HEK293 (cell line): ENCODE measurements at regions of chr22 and their contacts with region 1.

Region 1: DNA sequence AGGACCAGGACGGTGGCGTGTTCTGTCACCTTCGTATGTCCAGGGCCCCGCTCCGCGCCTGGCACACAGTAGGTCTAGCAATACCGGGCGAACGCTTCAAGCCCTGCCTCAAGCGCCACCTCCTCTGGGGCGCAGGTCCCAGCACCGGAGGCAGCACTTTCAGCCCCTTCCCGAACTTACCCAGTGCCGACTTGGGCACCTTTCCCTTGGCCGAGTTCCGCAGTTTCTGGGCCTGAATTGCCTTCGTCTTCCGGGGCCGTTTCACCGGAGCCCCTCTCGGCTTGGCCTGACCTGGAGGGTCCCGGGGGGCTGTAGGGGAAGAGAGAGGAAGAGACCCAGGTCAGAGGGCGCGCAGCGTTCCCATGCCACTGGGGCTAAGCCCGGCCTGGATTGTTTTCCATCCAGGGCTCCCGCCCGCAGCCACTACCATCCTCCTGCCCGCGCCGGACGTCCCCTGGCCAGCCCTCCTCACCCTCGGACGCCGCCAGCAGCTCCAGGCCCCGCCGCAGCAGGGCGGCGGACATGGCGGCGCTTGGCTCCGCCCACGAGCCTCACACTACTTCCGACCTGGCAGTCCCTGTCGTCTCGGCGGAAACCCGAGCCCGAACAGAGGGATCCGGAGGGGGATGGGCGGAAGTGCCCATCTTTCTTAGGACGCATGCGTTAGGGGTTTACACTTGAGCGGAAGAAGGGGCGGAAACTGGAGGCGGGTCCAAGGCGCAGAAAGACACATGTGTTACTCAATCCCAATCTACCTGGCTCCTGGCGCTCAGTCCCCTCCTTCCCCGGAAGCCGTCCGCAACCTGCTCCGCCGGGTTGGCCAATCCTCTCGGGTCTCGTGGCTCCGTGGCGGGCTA is at the start of gene RPS19BP1:
- H3K4me3 ChIP-seq: peak within 1 kb of the TSS; percentile 75
- H3K27ac ChIP-seq: peak within 1 kb of the TSS; percentile 79
- H3K4me1 ChIP-seq: peaks cover 14% of the 10 kb centered on the region
- CTCF ChIP-seq: peak; percentile 13; the same call in 1 of the 2 replicates

Region 2: DNA sequence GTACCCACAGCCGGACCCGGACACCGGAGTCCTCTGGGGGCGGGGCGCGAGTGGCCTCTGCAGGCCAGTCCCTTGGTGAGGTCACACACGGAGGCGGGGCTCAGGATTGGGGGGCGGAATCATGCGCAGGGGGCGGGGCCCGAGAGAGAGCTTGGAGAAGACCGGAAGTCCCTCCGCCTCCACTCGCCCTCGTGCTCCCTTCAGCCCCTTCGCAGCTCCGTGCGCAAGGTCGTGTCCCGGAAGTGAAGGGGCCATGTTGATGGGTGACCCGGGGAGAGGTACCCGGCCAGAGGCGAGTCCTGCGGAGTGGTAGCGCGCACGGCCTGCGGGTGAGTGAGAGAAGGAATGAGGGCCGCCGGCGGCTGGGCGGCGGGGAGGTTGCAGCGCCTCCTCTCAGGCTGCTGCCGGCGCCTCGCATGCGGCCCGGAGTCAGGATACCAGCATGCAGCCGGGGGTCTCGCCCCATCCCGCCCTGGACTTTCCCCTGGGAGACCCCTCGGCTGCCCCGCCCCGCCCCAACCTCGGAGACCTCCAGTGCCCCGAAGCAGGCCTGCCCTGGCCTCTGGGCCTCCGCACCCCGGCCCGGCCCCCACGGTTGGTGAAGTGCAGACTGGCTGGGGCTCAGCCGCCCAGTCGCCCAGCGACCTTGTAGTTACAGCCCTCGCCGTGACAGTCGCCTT is 30.2 kb before region 1 on chr22 and contains the start of gene MIEF1:
- CTCF ChIA-PET with region 1: interaction called, 380 read pairs
- POLR2A ChIA-PET with region 1: interaction called, 85 read pairs
- H3K4me3 ChIP-seq: peak within 1 kb of the TSS; percentile 92
- H3K27ac ChIP-seq: peak within 1 kb of the TSS; percentile 78
- H3K4me1 ChIP-seq: peaks cover 12% of the 10 kb centered on the region
- CTCF ChIP-seq: peak; percentile 12

Region 3: DNA sequence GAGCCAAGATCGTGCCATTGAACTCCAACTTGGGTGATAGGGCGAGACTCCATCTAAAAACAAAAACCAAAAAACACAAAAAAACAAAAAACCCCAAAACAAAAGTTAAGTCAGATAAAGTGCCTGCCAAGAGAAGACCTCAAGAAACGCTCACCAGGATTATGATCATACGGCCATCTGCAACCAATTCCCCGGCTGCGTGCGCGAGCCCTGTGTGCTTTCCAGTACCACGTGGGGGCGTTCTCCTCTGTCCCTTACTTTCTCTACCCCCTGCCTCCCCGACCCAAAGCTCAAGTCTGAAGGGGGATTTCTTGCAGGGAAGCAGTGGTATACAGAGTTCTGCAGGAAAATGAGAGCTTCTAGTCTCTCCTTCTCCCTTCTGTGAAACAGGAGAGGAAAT is 10.7 kb after region 1 on chr22:
- CTCF ChIA-PET with region 1: interaction called, 29 read pairs
- POLR2A ChIA-PET with region 1: no interaction called
- H3K4me3 ChIP-seq: no peak overlapping the region
- H3K27ac ChIP-seq: no peak overlapping the region
- H3K4me1 ChIP-seq: no peaks in the 10 kb centered on the region
- CTCF ChIP-seq: 0 out of 2 replicates have a peak, but pooled peaks have one; percentile 13

Region 4: DNA sequence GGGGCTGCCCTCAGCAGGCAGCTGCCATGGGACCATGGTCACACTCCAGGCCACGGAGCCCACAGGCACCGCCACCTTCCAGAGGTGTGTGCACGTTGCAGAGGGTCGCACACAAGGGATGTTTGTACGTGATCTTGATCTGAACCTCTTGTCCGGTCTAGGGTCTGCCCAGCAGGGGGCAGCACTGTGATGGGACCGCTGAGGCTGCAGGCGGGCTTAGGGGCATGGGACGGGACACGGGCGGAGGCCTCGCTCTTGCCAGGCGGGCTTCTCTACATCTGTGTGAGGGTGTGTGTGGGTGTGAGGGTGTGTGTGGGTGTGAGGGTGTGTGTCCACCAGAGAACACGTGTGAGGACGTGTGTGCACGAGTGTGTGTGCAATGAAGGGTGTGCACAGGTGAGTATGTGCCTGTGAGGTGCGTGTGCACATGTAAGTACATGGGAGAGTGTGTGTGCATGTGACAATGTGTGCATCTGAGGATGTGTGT is 90.5 kb after region 1 on chr22:
- CTCF ChIA-PET with region 1: no interaction called
- POLR2A ChIA-PET with region 1: no interaction called
- H3K4me3 ChIP-seq: no peak overlapping the region
- H3K27ac ChIP-seq: no peak overlapping the region
- H3K4me1 ChIP-seq: no peaks in the 10 kb centered on the region
- CTCF ChIP-seq: peak; percentile 76; the same call in 1 of the 2 replicates

Region 5: DNA sequence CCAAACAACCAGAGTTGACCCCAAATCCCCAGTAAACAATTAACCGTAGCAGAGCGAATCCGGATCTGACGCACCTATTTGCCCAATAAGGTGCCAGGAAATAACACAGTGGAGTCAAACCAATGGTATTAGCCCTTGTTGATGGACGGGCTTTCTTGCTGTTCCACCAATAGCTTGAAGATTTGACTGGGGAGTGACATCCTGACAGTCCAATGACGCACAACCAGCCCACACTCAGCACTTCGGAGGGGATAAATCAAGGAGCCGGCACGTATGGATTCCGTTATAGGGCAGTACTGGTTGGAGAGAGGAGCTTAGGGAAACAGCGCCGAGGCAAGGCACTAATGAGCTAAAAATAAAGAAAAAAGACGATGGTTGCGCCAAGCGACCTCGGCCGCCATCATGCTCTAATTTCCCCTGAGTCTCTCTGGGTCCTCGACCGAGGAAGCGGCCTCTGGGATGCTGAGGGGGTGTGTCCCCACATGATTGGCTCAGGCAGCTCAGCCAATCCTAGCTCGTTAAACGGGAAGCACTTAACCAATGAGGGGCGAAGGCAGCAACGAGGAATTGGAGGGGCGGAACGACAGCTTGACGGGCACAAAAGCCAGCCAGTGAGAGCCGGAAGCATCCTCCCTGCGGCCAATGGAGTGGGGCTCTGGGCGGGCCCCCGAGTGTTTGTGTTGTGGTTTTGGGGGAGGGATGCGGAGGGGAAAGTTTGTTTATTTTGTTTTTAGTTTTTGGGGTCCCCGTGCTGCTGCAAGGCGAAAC is 511.8 kb after region 1 on chr22:
- CTCF ChIA-PET with region 1: interaction called, 34 read pairs
- POLR2A ChIA-PET with region 1: interaction called, 9 read pairs
- H3K4me3 ChIP-seq: peak overlapping the region; percentile 99
- H3K27ac ChIP-seq: peak overlapping the region; percentile 72
- H3K4me1 ChIP-seq: peaks cover 20% of the 10 kb centered on the region
- CTCF ChIP-seq: no peak